Panc1 (cell line): ENCODE measurements at regions of chr15 and their contacts with region 1.

Region 1: DNA sequence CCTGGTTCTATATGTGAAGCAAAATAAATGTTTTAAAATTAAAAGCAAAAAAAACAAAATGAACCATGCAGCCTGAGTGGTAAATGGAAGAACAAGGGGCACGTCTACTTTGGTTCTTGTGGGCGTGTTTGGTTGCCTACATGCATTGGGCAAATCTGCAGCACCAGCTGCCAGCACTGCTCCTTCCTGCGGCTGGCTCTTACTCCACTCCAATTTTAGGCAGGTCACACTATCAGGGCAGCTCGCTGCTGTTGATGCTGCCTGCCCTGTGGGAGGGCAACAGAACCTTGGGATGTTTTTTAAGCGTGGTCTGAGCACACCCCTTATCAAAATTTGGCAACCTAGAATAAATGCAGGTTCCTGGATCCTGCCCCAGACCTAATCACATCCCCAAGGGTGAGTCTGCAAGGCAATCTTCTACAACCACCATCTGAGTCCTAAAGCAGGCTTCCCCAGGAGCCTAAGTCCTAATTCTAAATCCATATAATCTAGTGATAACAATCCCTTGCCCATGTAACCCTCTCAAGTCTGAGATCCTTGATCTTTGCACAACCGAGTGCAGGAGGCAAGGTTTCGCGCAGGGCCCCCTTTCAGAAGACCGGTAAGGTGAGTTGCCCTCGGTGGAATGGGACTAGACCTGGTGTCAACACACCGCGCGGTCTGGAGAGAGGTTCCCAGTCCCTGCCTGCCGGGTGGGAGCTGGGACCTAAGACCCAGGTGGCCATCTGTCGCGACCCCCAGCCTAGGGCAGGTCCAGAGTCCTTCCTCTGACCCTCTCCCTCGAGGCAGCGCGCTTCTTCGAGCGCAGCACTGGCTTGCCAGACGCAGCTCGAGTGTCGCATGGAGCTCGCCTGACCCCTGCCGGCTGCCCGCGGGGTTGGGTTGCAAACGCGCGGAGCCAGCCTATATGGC is 15.9 kb downstream of the IVD start:
- DNase-seq: peak; percentile 45
- ATAC-seq: peak; percentile 94
- H3K4me3 ChIP-seq: peak overlapping the region in 1 of 2 experiments; percentile 41; a peak in 2 of 4 replicates
- H3K27ac ChIP-seq: peak overlapping the region; percentile 26; the same call in 1 of the 2 replicates
- H3K4me1 ChIP-seq: peaks cover 19% of the 10 kb centered on the region
- H3K27me3 ChIP-seq: no peaks in the 10 kb centered on the region
- CTCF ChIP-seq: peak; percentile 98

Region 2: GRCh38 chr15:40108855-40109735 is 312.4 kb before region 1 on chr15 and contains the start of gene BMF:
- CTCF ChIA-PET with region 1: no interaction called
- POLR2A ChIA-PET with region 1: no interaction called
- in situ Hi-C with region 1: no loop called
- intact Hi-C with region 1: no loop called
- DNase-seq: peak; percentile 96
- ATAC-seq: peak; percentile 93
- H3K4me3 ChIP-seq: peak within 1 kb of the TSS; percentile 73 to 86
- H3K27ac ChIP-seq: peak within 1 kb of the TSS; percentile 72
- H3K4me1 ChIP-seq: peaks cover 24% of the 10 kb centered on the region
- H3K27me3 ChIP-seq: no peaks in the 10 kb centered on the region
- CTCF ChIP-seq: no peak; the same call in 1 of the 2 replicates
- total RNA-seq, gene BMF: 7.8 TPM

Region 3: GRCh38 chr15:40307421-40308211 is 113.9 kb before region 1 on chr15 and contains the start of gene PLCB2:
- CTCF ChIA-PET with region 1: no interaction called
- POLR2A ChIA-PET with region 1: no interaction called
- in situ Hi-C with region 1: no loop called
- intact Hi-C with region 1: no loop called
- DNase-seq: no peak
- ATAC-seq: peak; percentile 70
- H3K4me3 ChIP-seq: no peak within 1 kb of the TSS
- H3K27ac ChIP-seq: no peak within 1 kb of the TSS
- H3K4me1 ChIP-seq: peaks cover 5% of the 10 kb centered on the region
- H3K27me3 ChIP-seq: no peaks in the 10 kb centered on the region
- CTCF ChIP-seq: no peak; the same call in 1 of the 2 replicates
- total RNA-seq, gene PLCB2: 1.7 TPM

Region 4: DNA sequence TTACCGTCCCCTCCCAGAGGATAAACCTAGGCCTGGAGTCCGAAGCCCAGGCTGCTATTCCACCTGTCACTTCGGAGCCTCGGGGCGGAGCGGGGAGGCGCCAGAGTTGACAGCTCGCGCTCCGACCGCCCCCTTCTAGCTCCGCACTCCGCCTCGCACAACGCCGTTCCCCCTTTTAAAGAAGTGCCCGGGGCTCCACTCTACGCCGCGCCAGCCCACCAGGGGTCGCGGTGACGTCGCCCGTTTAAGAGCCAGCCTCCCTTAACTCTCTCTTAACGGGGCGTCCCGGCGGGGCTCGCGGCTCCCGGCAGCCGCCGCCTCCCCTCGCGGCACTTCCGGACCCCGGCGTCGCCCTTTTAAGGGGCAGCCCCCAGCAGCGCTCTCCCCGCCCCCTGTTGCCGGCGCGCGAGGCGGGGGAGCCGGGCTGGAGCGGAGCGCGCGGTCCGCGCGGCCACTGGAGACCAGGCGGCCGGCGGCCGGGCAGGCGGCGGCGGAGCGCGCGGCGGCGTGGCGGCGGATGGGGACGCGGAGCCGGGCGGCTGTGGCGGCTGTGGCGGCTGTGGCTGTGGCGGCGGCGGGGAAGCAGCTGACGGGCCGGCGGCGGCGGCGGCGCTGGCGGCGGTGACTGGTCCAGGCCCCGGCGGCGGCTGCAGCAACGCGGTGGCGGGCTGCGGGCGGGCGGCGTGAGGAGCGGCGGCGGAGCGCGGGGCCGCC is 98.1 kb before region 1 on chr15 and contains the start of gene INAFM2:
- CTCF ChIA-PET with region 1: interaction called, 4 read pairs
- POLR2A ChIA-PET with region 1: no interaction called
- in situ Hi-C with region 1: no loop called
- intact Hi-C with region 1: loop called (anchors 5 kb)
- DNase-seq: no peak
- ATAC-seq: peak; percentile 91
- H3K4me3 ChIP-seq: peak within 1 kb of the TSS; percentile 55 to 63
- H3K27ac ChIP-seq: no peak within 1 kb of the TSS
- H3K4me1 ChIP-seq: peaks cover 25% of the 10 kb centered on the region
- H3K27me3 ChIP-seq: no peaks in the 10 kb centered on the region
- CTCF ChIP-seq: peak; percentile 51; the same call in 1 of the 2 replicates
- total RNA-seq, gene INAFM2: 10.4 TPM

Region 5: GRCh38 chr15:40344631-40345120 is 76.8 kb before region 1 on chr15:
- CTCF ChIA-PET with region 1: interaction called, 19 read pairs
- POLR2A ChIA-PET with region 1: interaction called, 4 read pairs
- in situ Hi-C with region 1: no loop called
- intact Hi-C with region 1: loop called (anchors 2 kb)
- DNase-seq: no peak
- ATAC-seq: peak; percentile 42
- H3K4me3 ChIP-seq: no peak overlapping the region
- H3K27ac ChIP-seq: no peak overlapping the region
- H3K4me1 ChIP-seq: peaks cover 39% of the 10 kb centered on the region
- H3K27me3 ChIP-seq: no peaks in the 10 kb centered on the region
- CTCF ChIP-seq: peak; percentile 93

Region 6: GRCh38 chr15:40357723-40358470 is 63.6 kb before region 1 on chr15 and contains the start of gene DISP2:
- CTCF ChIA-PET with region 1: interaction called, 10 read pairs
- POLR2A ChIA-PET with region 1: interaction called, 5 read pairs
- in situ Hi-C with region 1: no loop called
- intact Hi-C with region 1: no loop called
- DNase-seq: no peak
- ATAC-seq: peak; percentile 93
- H3K4me3 ChIP-seq: peak within 1 kb of the TSS; percentile 58 to 67
- H3K27ac ChIP-seq: peak within 1 kb of the TSS; percentile 66
- H3K4me1 ChIP-seq: peaks cover 7% of the 10 kb centered on the region
- H3K27me3 ChIP-seq: no peaks in the 10 kb centered on the region
- CTCF ChIP-seq: no peak
- total RNA-seq, gene DISP2: 10.0 TPM

Region 7: DNA sequence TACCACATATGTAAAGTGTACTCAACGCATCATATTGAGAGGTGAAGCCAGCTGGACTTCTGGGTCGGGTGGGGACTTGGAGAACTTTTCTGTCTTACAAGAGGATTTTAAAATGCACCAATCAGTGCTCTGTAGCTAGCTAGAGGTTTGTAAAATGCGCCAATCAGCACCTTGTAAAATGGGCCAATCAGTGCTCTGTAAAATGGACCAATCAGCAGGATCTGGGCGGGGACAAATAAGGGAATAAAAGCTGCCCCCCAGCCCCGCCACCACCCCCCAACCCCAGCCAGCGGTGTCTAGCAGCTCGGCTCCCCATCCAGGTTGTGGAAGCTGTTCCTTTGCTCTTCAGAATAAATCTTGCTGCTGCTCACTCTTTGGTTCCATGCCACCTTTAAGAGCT is 22.1 kb before region 1 on chr15:
- CTCF ChIA-PET with region 1: interaction called, 4 read pairs
- POLR2A ChIA-PET with region 1: interaction called, 11 read pairs
- in situ Hi-C with region 1: no loop called
- intact Hi-C with region 1: no loop called
- DNase-seq: no peak
- ATAC-seq: no peak
- H3K4me3 ChIP-seq: no peak overlapping the region
- H3K27ac ChIP-seq: no peak overlapping the region
- H3K4me1 ChIP-seq: no peaks in the 10 kb centered on the region
- H3K27me3 ChIP-seq: no peaks in the 10 kb centered on the region
- CTCF ChIP-seq: no peak

Region 8: DNA sequence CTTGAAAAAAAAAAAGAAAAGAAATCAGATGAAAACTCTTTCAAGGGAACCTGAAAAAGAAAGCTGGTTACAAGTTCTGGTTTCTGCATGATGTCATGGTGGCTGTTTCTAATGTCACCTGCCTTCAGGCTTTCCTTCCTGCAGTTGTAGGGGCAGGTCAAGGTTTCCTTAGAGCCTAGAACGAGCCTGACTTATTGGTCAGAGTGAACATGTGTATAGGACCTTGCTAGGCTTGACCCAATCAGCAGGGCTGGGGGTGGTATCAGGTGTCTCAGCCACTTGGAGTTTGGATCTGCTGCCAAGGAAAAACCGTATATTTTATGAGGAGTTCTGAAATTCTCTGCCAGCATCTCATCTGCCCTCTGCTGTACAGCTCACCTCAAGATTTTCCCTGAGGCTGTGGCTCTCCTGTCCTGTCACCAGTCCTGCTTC is 12.1 kb before region 1 on chr15:
- CTCF ChIA-PET with region 1: no interaction called
- POLR2A ChIA-PET with region 1: no interaction called
- in situ Hi-C with region 1: no loop called
- intact Hi-C with region 1: no loop called
- DNase-seq: no peak
- ATAC-seq: no peak
- H3K4me3 ChIP-seq: no peak overlapping the region
- H3K27ac ChIP-seq: no peak overlapping the region
- H3K4me1 ChIP-seq: no peaks in the 10 kb centered on the region
- H3K27me3 ChIP-seq: no peaks in the 10 kb centered on the region
- CTCF ChIP-seq: no peak